Activated naive CD4-positive, alpha-beta T cell treated with anti-CD3 and anti-CD28 coated beads for 36 hours (primary cell): ENCODE measurements at regions of chr21 and their contacts with region 1.

Region 1: DNA sequence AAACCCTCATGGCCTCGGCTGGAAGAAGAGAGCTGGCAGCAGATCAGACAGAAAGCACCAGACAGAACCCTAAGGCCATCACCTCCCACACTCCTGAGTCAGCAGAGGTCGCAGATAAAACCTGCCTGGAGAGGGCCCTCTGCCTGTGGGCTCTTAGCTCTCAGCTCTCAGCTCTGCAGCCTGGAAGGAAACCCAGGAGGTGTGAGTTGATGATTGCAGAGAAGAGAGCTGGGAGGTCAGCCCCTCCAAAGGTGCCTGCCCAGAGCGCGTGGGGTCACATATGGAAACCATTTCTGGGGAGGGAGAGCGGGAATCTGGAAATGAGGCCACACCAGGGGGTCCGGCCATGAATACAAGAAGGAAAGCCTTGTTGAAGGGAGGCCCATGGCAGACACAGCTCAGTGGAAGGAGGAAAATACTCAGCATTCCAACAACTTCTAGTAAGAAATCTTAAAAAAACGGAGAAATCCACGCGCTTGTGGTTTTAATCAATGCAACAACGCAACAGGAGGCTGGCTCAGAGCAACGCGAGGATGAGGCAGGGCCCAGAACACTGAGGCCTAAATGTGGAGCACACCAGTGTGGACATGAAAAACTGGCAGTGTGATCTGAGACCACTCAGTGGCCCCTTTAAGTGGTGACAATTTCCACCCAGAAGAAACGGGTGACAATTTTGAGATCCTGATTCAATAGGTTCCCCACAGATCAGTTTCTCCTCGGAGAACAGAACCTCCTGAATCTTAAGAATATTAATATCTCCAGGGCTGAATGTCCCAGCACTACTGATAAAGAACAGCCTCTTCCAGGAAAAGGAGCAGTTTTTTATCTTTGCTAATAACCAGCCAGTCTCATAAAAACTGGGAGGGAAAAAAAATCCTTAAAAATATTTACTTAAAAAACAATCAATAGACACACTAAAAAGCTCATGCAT is 45.7 kb downstream of the PSMG1 start:
- DNase-seq: no peak
- H3K4me3 Mint-ChIP-seq: no peak overlapping the region
- H3K27ac Mint-ChIP-seq: no peak overlapping the region
- H3K4me1 Mint-ChIP-seq: no peaks in the 10 kb centered on the region
- H3K27me3 Mint-ChIP-seq: peaks cover 2% of the 10 kb centered on the region

Region 2: GRCh38 chr21:38505654-38506515 is 631.6 kb before region 1 on chr21:
- CTCF ChIA-PET with region 1: interaction called, 4 read pairs
- intact Hi-C with region 1: loop called (anchors 2 kb)
- DNase-seq: peak; percentile 49
- H3K4me3 Mint-ChIP-seq: no peak overlapping the region
- H3K27ac Mint-ChIP-seq: no peak overlapping the region
- H3K4me1 Mint-ChIP-seq: no peaks in the 10 kb centered on the region
- H3K27me3 Mint-ChIP-seq: peaks cover 31% of the 10 kb centered on the region

Region 3: DNA sequence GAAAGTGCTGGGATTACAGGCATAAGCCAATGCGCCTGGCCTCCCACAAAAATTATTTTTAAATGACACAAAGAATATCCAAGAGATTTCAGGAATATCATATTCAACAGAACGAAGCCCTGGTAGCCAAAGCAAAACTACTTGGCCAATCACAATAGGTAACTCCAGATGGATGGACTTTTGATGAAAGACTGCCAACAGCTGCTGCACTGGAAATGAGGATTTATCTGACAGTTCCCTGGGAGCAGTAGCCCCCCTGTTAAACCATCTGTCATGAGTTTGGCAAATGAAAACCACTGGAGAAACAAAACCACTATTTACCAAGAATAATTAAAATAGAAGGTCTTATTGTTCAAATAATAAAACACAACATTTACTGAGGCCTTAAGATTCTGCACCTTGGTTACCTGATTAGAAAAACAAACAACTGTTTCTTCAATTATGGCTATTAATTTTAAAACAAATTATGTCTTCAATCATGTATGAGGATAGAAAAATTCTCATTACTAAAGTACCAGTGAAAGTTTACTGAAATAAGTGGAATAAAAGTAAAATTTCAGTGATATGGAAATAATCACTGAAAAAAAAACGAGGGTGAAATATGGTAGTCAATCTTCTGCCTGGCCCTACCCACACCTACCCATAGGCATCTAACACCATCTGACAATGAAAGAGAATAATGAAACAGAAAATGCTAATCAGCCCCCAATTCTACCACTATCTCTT is 80.0 kb after region 1 on chr21:
- CTCF ChIA-PET with region 1: no interaction called
- intact Hi-C with region 1: no loop called
- DNase-seq: no peak
- H3K4me3 Mint-ChIP-seq: no peak overlapping the region
- H3K27ac Mint-ChIP-seq: no peak overlapping the region
- H3K4me1 Mint-ChIP-seq: peaks cover 12% of the 10 kb centered on the region
- H3K27me3 Mint-ChIP-seq: no peaks in the 10 kb centered on the region